ENCODE measurements at regions of chr17 and their contacts with region 1.

Region 1: DNA sequence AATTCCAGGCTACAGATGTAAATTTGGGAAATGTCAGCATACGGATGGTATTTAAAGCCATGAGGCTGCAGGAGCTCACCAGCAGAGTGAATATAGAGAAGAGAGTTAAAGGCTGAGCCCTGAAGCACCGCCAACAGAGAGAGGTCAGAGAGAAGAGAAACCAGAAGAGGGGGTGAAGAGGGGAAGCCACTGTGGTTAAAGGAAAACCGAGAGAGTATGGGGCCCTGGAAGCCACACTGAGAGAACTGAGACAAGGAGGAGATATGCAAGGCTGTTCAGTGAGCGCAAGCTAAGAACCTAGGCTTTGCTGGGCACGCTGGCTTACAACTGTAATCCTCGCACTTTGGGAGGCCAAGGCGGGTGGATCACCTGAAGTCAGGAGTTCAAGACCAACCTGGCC is 24.6 kb downstream of the COPRS start:
- DNase-seq: no peak
- H3K4me3 ChIP-seq: no peak overlapping the region
- H3K27ac ChIP-seq: no peak overlapping the region
- H3K4me1 ChIP-seq: peaks cover 0 to 12% (median 7%) of the 10 kb centered on the region in 4 donors
- H3K27me3 ChIP-seq: no peaks in the 10 kb centered on the region
- CTCF ChIP-seq: no peak

Region 2: DNA sequence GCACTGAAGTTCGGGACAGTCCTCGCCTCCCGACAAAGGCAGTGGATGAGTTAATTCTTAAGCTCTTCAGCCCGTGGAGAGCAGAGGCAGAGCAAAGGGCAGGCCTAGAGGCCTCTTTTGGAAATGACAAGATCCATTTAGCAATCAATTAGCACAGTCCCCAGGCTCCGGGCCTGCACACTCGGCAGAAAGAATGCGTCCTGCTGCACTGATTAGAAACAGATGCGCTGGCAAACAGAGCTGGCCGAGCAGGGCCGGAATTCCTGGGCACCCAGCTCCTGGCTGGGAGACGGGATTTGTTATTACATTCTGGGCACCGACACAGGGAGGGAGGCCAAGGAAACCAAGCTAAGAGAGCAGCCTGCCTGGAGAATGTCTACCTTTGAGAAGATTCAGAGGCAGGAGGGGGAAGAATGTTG is 138.3 kb before region 1 on chr17:
- intact Hi-C with region 1: loop called (anchors 10 kb)
- DNase-seq: peak; percentile 87 to 95
- H3K4me3 ChIP-seq: peak overlapping the region in 1 of 2 donors; percentile 6
- H3K27ac ChIP-seq: peak overlapping the region; percentile 71 to 75
- H3K4me1 ChIP-seq: peaks cover 8 to 93% (median 60%) of the 10 kb centered on the region in 4 donors
- H3K27me3 ChIP-seq: no peaks in the 10 kb centered on the region
- CTCF ChIP-seq: no peak

Region 3: GRCh38 chr17:32215696-32216095 is 381.2 kb after region 1 on chr17:
- intact Hi-C with region 1: no loop called
- DNase-seq: no peak
- H3K4me3 ChIP-seq: no peak overlapping the region
- H3K27ac ChIP-seq: no peak overlapping the region
- H3K4me1 ChIP-seq: no peaks in the 10 kb centered on the region
- H3K27me3 ChIP-seq: no peaks in the 10 kb centered on the region
- CTCF ChIP-seq: no peak

Measured in tibial artery (tissue), 4 donors.